Left lung (tissue), 14 donors: ENCODE measurements at regions of chr13 and their contacts with region 1.

Region 1: DNA sequence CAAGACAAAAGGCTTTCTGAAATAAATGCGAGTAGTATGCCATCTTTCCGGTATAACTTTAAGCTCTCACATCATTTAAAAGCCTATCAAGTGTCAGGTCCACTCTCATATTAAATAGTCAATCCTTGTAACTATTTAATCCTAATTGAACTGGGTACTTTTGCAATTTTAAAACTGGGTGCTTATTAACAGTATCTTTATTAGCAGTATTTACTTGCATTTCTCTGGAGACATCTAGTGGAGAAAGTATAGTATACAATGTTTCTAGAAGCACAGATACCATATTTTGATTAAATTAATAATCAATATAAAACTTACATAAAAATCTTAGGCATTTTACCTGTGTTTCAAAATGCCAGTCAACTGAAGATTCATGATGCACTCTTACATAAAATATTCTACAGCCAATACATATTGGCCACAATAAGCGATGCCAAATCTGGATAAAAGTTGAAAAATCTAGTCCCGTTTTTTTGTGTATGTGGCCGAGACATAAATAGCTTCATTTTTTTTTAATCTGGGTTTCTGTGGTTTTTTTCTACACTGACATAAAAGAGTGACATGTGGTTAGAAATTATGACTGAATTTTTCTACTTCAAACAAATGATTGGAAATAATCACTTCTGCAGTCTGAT is 4.3 kb upstream of the POSTN start:
- DNase-seq: no peak
- ATAC-seq: peak; percentile 52
- H3K4me3 ChIP-seq: no peak overlapping the region
- H3K27ac ChIP-seq: no peak overlapping the region
- H3K4me1 ChIP-seq: no peaks in the 10 kb centered on the region
- H3K27me3 ChIP-seq: no peaks in the 10 kb centered on the region
- CTCF ChIP-seq: peak; percentile 21 to 53

Region 2: GRCh38 chr13:37109051-37109678 is 493.7 kb before region 1 on chr13:
- intact Hi-C with region 1: loop called in 1 of 2 experiments (anchors 2 kb)
- DNase-seq: peak in 2 of 4 donors; percentile 59 to 72
- ATAC-seq: peak; percentile 77
- H3K4me3 ChIP-seq: no peak overlapping the region
- H3K27ac ChIP-seq: no peak overlapping the region
- H3K4me1 ChIP-seq: no peaks in the 10 kb centered on the region
- H3K27me3 ChIP-seq: no peaks in the 10 kb centered on the region
- CTCF ChIP-seq: peak; percentile 44 to 47